Pancreas (tissue), 10 donors: ENCODE measurements at regions of chr6 and their contacts with region 1.

Region 1: GRCh38 chr6:44265007-44265721 is at the start of gene NFKBIE:
- DNase-seq: peak; percentile 94 to 99 (median 96)
- ATAC-seq: peak; percentile 87 to 92 (median 88)
- H3K4me3 ChIP-seq: peak within 1 kb of the TSS; percentile 45 to 93 (median 80)
- H3K27ac ChIP-seq: peak within 1 kb of the TSS; percentile 48 to 87 (median 78)
- H3K4me1 ChIP-seq: peaks cover 0 to 21% (median 4%) of the 10 kb centered on the region in 3 donors
- H3K27me3 ChIP-seq: no peaks in the 10 kb centered on the region
- CTCF ChIP-seq: peak in 1 of 4 donors; percentile 6
- total RNA-seq, gene NFKBIE: 2.5 to 16.9 (median 5.5) TPM

Region 2: GRCh38 chr6:44201638-44202303 is 63.4 kb before region 1 on chr6:
- intact Hi-C with region 1: no loop called
- DNase-seq: no peak
- ATAC-seq: peak in 2 of 4 donors; percentile 7 to 24
- H3K4me3 ChIP-seq: no peak overlapping the region
- H3K27ac ChIP-seq: no peak overlapping the region
- H3K4me1 ChIP-seq: peaks cover 13 to 15% (median 15%) of the 10 kb centered on the region in 3 donors
- H3K27me3 ChIP-seq: no peaks in the 10 kb centered on the region
- CTCF ChIP-seq: no peak

Region 3: GRCh38 chr6:44332585-44332984 is 67.4 kb after region 1 on chr6:
- intact Hi-C with region 1: loop called in 2 of 3 experiments (anchors 5 kb)
- DNase-seq: no peak
- ATAC-seq: no peak
- H3K4me3 ChIP-seq: no peak overlapping the region
- H3K27ac ChIP-seq: no peak overlapping the region
- H3K4me1 ChIP-seq: no peaks in the 10 kb centered on the region
- H3K27me3 ChIP-seq: peaks cover 0 to 5% (median 0%) of the 10 kb centered on the region in 4 donors
- CTCF ChIP-seq: no peak

Region 4: GRCh38 chr6:44338228-44339122 is 73.3 kb after region 1 on chr6:
- intact Hi-C with region 1: loop called in 2 of 3 experiments (anchors 5 kb)
- DNase-seq: peak; percentile 35 to 66 (median 46)
- ATAC-seq: peak; percentile 71 to 92 (median 88)
- H3K4me3 ChIP-seq: no peak overlapping the region
- H3K27ac ChIP-seq: peak overlapping the region in 1 of 4 donors; percentile 17
- H3K4me1 ChIP-seq: peaks cover 0 to 3% (median 0%) of the 10 kb centered on the region in 3 donors
- H3K27me3 ChIP-seq: no peaks in the 10 kb centered on the region
- CTCF ChIP-seq: peak; percentile 40 to 55 (median 48)